ENCODE measurements at regions of chr4 and their contacts with region 1.

Region 1: DNA sequence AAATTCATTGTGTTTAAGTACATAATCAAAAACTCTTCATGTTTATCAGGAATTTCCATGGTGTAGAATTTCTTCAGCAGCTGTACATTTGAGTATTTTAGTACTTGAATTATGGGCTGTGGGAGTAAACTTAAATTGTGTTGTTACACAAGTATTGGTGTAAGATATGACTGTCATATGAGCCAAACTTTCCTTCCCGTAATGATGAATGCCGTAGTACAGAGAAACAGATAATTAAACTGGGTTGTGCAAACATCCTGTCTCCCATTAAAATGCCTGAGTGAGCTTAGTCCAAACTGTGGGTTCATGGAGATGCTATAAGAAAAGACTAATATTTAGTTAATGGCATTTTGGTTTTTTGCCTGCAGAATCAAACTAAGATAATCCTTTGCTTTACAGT is 159.2 kb downstream of the SLC4A4 start:
- DNase-seq: peak; percentile 78
- ATAC-seq: peak; percentile 95
- H3K4me3 ChIP-seq: no peak overlapping the region
- H3K27ac ChIP-seq: peak overlapping the region; percentile 11
- H3K4me1 ChIP-seq: peaks cover 17% of the 10 kb centered on the region
- H3K27me3 ChIP-seq: no peaks in the 10 kb centered on the region
- CTCF ChIP-seq: no peak

Region 2: GRCh38 chr4:71520850-71521249 is 22.8 kb after region 1 on chr4:
- CTCF ChIA-PET with region 1: no interaction called
- POLR2A ChIA-PET with region 1: no interaction called
- intact Hi-C with region 1: loop called (anchors 2 kb)
- DNase-seq: peak; percentile 59
- ATAC-seq: peak; percentile 84
- H3K4me3 ChIP-seq: no peak overlapping the region
- H3K27ac ChIP-seq: no peak overlapping the region
- H3K4me1 ChIP-seq: peaks cover 11% of the 10 kb centered on the region; the same call in 1 of the 2 replicates
- H3K27me3 ChIP-seq: no peaks in the 10 kb centered on the region
- CTCF ChIP-seq: no peak

Region 3: GRCh38 chr4:71570492-71570891 is 72.5 kb after region 1 on chr4:
- CTCF ChIA-PET with region 1: no interaction called
- POLR2A ChIA-PET with region 1: no interaction called
- intact Hi-C with region 1: no loop called
- DNase-seq: no peak
- ATAC-seq: no peak
- H3K4me3 ChIP-seq: no peak overlapping the region
- H3K27ac ChIP-seq: no peak overlapping the region
- H3K4me1 ChIP-seq: no peaks in the 10 kb centered on the region
- H3K27me3 ChIP-seq: no peaks in the 10 kb centered on the region
- CTCF ChIP-seq: no peak